HEK293T (cell line): ENCODE measurements at regions of chr10 and their contacts with region 1.

Region 1: DNA sequence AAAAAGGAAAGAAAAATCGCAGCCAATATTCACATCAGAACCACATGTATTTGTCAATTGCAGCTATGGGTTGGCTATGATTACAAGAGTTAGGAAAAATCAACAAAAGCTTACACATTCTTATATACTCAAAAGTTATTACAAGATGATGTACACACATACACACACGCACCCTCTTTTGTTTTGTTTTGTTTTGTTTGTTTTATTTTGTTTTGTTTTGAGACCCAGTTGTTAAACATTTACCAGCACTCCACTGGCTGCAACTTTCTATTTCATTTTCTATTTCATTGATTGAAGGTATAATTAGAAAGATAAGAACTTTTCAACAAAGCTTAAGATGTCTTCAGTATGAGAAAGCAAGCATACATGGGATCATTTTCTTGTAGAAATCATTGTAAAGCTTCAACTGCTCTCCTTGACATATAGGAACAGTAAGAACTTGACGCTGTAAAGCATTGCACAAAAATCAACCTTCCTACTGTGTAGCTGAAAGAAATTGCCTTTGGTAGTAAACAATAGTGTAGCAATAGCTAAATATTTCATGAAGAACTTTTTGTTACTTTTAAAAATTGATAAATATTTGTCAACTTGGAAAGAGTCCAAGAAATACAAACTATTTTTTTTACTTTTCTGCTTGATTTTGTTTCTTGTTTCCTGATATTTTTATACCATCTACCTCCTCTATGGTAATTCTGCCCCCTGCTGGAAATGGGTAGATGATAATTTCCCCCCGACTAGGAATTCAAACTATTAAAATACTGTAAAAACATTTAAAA is 205.9 kb downstream of the MBL2 start:
- DNase-seq: peak; percentile 28

Region 2: DNA sequence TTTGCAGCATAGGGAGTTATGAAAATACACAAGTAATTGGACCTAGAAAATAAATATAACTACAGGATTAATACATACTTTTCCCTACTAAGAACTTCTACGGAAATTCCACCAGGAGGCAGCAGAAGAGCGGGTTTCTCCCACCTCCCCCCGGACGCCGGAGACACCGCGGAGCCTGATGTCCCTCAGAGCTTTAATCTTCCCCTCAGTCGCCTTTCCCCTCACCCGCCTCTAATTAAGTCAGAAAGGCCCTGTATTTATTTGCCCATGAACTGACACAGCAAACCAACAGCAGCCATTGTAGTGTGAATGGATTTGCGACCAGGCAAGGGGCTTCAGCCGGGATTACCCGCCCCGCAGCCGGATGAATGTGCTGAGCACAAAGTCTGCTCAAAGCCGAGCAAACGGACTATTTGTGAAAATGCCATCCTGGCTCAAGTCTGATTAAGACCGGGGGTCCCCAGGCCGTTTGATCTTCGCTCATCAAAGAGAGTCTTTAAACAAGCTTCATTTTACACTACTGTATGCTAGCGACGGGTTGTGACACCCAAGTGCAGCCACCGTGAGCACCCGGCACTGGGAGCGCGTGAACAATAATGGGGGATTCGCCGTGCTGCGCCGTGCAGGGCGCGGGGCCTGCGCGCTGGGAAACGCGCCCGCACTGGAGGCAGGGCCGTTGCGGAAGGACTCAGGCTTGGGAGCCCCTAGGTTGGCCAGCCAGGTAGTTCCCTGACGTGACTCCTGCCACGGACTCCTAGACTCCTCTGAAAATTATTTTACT is 258.2 kb before region 1 on chr10:
- CTCF ChIA-PET with region 1: interaction called, 25 read pairs
- POLR2A ChIA-PET with region 1: no interaction called
- DNase-seq: peak; percentile 82